IMR-90 (cell line): ENCODE measurements at regions of chr2 and their contacts with region 1.

Region 1: GRCh38 chr2:50401772-50402653 is 629.9 kb downstream of the NRXN1 start:
- DNase-seq: peak; percentile 52
- ATAC-seq: peak; percentile 72
- H3K4me3 ChIP-seq: no peak overlapping the region
- H3K27ac ChIP-seq: no peak overlapping the region
- H3K4me1 ChIP-seq: no peaks in the 10 kb centered on the region
- H3K27me3 ChIP-seq: no peaks in the 10 kb centered on the region
- CTCF ChIP-seq: peak; percentile 81
- POLR2A ChIP-seq: no peak
- RAD21 ChIP-seq: peak; percentile 75

Region 2: GRCh38 chr2:49255409-49255971 is 1146.5 kb before region 1 on chr2:
- CTCF ChIA-PET with region 1: interaction called, 7 read pairs
- POLR2A ChIA-PET with region 1: no interaction called
- dilution Hi-C with region 1: no loop called
- in situ Hi-C with region 1: no loop called
- intact Hi-C with region 1: loop called (anchors 1 kb)
- DNase-seq: no peak
- ATAC-seq: no peak
- H3K4me3 ChIP-seq: no peak overlapping the region
- H3K27ac ChIP-seq: no peak overlapping the region
- H3K4me1 ChIP-seq: no peaks in the 10 kb centered on the region
- H3K27me3 ChIP-seq: no peaks in the 10 kb centered on the region
- CTCF ChIP-seq: peak; percentile 23; the same call in 1 of the 2 replicates
- POLR2A ChIP-seq: no peak
- RAD21 ChIP-seq: peak; percentile 24; the same call in 1 of the 2 replicates

Region 3: DNA sequence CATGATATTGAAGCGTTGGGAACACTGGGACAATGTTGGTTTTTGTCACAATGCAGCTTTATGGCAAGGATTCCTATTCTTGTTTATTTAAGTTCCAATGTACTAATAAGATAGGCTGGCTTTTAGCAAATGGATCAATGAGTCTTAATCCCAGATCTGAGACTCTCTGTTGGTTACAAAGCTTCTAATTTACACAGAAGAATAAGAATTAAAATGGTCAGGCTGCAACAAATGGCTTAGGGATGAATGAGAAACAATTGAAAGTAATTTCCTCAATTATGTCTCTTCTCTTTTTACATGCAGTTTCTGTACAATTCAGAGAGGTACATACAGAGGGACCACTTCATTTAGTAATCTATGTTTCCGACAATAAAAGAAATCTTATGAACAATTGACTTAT is 10.5 kb before region 1 on chr2:
- CTCF ChIA-PET with region 1: interaction called, 10 read pairs
- POLR2A ChIA-PET with region 1: no interaction called
- dilution Hi-C with region 1: no loop called
- in situ Hi-C with region 1: no loop called
- intact Hi-C with region 1: no loop called
- DNase-seq: no peak
- ATAC-seq: no peak
- H3K4me3 ChIP-seq: no peak overlapping the region
- H3K27ac ChIP-seq: no peak overlapping the region
- H3K4me1 ChIP-seq: no peaks in the 10 kb centered on the region
- H3K27me3 ChIP-seq: no peaks in the 10 kb centered on the region
- CTCF ChIP-seq: no peak
- POLR2A ChIP-seq: no peak
- RAD21 ChIP-seq: no peak